ENCODE measurements at regions of chr15 and their contacts with region 1.

Region 1: DNA sequence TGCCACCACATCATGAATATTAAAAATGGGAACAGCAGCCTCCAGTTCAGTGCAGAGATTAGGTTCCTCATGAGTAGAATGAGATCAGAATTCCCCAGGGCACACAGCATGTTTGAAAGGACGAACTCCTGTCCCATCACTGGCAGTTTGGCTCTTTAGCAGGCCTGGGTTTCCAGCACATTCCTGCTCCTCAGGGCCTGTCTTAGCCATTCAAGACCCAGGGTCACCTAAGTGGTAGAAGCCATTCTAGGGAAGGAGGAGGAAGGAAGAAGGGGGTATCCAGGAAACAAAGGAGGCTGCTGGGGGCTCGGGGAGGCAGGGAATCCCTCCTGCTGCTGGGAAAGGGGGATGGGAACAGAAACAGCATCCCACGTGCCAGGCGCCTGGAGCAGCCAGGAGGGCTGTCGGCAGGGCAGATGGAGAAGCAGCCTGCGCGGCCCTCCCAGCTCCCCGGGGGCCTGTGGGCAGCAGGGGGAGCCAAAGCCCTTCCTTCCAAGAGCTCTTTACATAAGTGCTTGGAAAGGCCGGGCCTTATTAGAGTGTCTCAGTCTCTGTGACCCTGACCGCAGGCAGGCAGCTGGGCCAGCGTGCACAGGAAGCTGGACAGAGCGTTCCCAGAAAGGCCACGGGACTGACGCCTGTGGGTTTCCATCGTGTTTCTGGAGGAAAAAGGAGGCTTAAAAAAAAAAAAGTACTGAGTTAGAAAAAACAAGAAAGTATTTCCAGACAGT is 24.7 kb downstream of the LOXL1 start:
- DNase-seq: peak; percentile 66
- ATAC-seq: peak; percentile 58
- H3K4me3 ChIP-seq: no peak overlapping the region
- H3K4me3 Mint-ChIP-seq: no peak overlapping the region
- H3K27ac ChIP-seq: no peak overlapping the region
- H3K27ac Mint-ChIP-seq: no peak overlapping the region
- H3K4me1 ChIP-seq: peaks cover 6 to 13% of the 10 kb centered on the region in 2 donors
- H3K4me1 Mint-ChIP-seq: peaks cover 16% of the 10 kb centered on the region
- H3K27me3 ChIP-seq: peaks cover 0 to 7% (median 0%) of the 10 kb centered on the region in 4 experiments
- H3K27me3 Mint-ChIP-seq: peaks cover 6% of the 10 kb centered on the region
- CTCF ChIP-seq: peak; percentile 66

Region 2: DNA sequence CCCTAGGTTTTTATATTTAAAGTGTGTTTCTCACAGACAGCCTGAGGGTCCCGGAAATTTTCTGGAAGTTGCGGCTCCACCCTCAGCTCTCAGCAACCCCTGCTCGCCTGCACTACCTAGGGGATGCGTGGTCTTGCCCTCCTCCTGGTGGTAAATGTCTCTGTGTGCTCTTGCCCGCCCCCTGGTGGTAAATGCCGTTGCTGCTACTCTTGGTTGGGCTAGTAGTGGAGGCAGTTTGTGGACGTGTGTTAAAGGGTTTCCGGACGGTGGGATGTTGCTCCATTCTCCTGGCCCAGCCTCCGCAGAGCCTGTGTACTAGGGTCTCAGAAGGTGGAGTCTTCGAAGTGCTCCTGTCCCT is 13.7 kb after region 1 on chr15:
- CTCF ChIA-PET with region 1: interaction called, 20 read pairs
- POLR2A ChIA-PET with region 1: no interaction called
- intact Hi-C with region 1: loop called (anchors 1 kb)
- DNase-seq: peak; percentile 85
- ATAC-seq: peak; percentile 87
- H3K4me3 ChIP-seq: peak overlapping the region in 4 of 5 experiments; percentile 17 to 47 (median 44)
- H3K4me3 Mint-ChIP-seq: peak overlapping the region; percentile 82
- H3K27ac ChIP-seq: no peak overlapping the region
- H3K27ac Mint-ChIP-seq: peak overlapping the region; percentile 7
- H3K4me1 ChIP-seq: peaks cover 21 to 29% of the 10 kb centered on the region in 2 donors
- H3K4me1 Mint-ChIP-seq: peaks cover 22% of the 10 kb centered on the region
- H3K27me3 ChIP-seq: no peaks in the 10 kb centered on the region
- H3K27me3 Mint-ChIP-seq: peaks cover 3% of the 10 kb centered on the region
- CTCF ChIP-seq: peak; percentile 91

Measured in B cell (primary cell).